ENCODE measurements at regions of chr6 and their contacts with region 1.

Region 1: DNA sequence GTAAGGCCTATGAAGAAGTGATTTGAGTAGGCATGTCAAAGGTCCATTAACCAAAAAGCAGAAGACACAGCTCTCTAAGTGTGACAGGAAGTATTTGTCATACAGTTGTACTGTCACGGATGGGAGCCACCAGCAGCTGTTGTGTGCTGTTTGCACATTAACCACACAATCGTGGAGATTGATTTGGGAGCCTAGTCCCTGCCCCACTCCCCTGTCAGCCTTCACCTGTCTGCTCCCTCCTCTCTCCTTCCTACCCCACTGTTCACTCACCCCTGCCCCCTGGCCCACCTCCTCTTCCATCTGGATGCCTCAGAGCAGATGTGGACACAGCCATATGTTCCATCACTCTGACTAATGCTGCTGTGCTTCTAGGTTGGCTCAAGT is 124.7 kb upstream of the SPACA1 start:
- DNase-seq: peak; percentile 98
- H3K4me3 ChIP-seq: peak overlapping the region; percentile 31
- H3K27ac ChIP-seq: peak overlapping the region; percentile 99
- H3K4me1 ChIP-seq: peaks cover 99% of the 10 kb centered on the region
- CTCF ChIP-seq: no peak

Region 2: GRCh38 chr6:87756858-87757257 is 166.1 kb before region 1 on chr6:
- CTCF ChIA-PET with region 1: no interaction called
- POLR2A ChIA-PET with region 1: interaction called, 5 read pairs
- intact Hi-C with region 1: loop called (anchors 2 kb)
- DNase-seq: peak; percentile 94
- H3K4me3 ChIP-seq: peak overlapping the region; percentile 23
- H3K27ac ChIP-seq: peak overlapping the region; percentile 78
- H3K4me1 ChIP-seq: peaks cover 49% of the 10 kb centered on the region
- CTCF ChIP-seq: no peak

Region 3: GRCh38 chr6:87870556-87870955 is 52.4 kb before region 1 on chr6:
- CTCF ChIA-PET with region 1: no interaction called
- POLR2A ChIA-PET with region 1: interaction called, 318 read pairs
- intact Hi-C with region 1: no loop called
- DNase-seq: no peak
- H3K4me3 ChIP-seq: no peak overlapping the region
- H3K27ac ChIP-seq: no peak overlapping the region
- H3K4me1 ChIP-seq: peaks cover 58% of the 10 kb centered on the region
- CTCF ChIP-seq: no peak

Region 4: DNA sequence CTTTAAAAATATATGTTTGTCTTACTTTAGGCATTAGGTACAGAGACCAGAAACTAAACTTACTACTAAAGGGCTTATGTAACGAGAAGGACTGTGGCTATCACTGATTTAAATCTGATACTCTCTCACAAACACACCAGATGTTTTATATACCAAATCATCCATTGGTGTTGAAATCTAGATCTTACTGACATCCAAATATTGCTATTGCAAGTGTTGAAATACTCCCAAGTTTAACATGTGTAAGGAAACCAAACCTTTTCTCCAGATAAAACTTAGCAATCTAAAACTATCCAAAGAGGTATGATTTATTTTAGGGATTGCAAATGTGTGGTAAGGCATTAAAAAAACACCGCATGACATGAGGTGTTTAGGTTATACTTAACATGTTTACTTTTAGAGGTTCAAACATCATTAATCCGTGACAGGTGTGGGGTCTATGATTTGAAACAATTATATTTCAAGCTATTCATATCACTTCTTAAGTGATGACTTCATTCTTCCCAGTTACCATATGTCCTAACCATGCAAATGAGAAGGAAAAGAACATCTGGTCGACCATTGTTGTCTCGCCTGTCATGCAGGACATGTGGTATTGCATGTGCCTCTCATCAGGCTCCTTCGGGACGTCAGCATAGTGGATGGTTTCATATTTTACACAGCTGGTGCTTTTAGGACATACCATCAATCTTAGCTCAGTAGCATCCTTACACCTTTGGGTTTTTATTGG is 43.6 kb before region 1 on chr6:
- CTCF ChIA-PET with region 1: interaction called, 6 read pairs
- POLR2A ChIA-PET with region 1: interaction called, 318 read pairs
- intact Hi-C with region 1: loop called (anchors 1 kb)
- DNase-seq: peak; percentile 100
- H3K4me3 ChIP-seq: peak overlapping the region; percentile 11
- H3K27ac ChIP-seq: peak overlapping the region; percentile 99
- H3K4me1 ChIP-seq: peaks cover 78% of the 10 kb centered on the region
- CTCF ChIP-seq: no peak

Region 5: DNA sequence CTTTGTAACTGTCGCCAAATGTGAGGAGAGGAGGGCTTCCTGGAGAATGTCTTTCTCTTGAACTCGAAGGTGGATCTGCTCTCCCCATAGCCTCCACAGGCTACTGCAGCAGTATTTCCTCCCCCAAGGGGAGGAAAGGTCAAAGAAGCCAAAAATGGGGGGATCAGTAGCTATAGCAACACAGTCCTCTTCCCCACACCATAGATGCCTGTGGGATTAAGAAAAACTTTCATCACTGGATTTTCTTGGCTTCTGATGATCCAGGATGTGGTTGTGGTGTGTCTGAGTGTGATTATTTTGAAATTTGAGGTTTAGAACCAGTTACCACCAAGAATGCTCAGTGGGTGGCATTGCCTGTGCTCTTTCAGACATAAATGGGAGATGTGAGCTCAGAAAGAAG is 15.4 kb before region 1 on chr6:
- CTCF ChIA-PET with region 1: interaction called, 29 read pairs
- POLR2A ChIA-PET with region 1: interaction called, 649 read pairs
- intact Hi-C with region 1: loop called (anchors 1 kb)
- DNase-seq: peak; percentile 72
- H3K4me3 ChIP-seq: no peak overlapping the region
- H3K27ac ChIP-seq: peak overlapping the region; percentile 99
- H3K4me1 ChIP-seq: peaks cover 98% of the 10 kb centered on the region
- CTCF ChIP-seq: no peak

Region 6: DNA sequence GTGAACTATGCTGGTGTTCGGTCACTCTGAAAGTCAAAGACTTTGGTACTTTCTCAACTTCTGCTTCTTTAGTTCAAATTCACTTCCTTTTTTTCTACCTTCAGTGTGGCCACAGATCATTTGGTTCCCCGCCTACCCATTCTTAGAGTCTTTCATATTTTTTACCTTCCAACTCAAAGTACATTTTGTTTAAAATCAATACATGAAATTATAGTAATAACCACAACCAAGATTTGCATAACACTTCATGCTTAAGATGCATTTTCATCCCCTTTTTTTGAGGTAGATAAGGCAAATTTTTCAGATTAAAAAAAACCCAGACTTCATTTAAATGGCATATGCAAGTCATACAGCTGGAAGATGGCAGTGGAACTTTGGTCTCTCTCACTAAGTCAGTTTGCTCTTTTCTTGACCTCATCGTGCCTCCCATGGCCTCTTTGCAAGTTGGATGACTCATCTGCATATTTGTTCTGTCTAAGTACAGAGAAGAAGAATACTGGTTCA is 255.1 kb after region 1 on chr6:
- CTCF ChIA-PET with region 1: no interaction called
- POLR2A ChIA-PET with region 1: interaction called, 10 read pairs
- intact Hi-C with region 1: loop called (anchors 1 kb)
- DNase-seq: peak; percentile 91
- H3K4me3 ChIP-seq: peak overlapping the region; percentile 74
- H3K27ac ChIP-seq: peak overlapping the region; percentile 93
- H3K4me1 ChIP-seq: peaks cover 68% of the 10 kb centered on the region
- CTCF ChIP-seq: no peak